PC-9 (cell line): ENCODE measurements at regions of chr4 and their contacts with region 1.

Region 1: GRCh38 chr4:39169426-39170185 is 12.7 kb upstream of the WDR19 start:
- DNase-seq: peak; percentile 27 to 52
- H3K4me3 ChIP-seq: no peak overlapping the region
- H3K27ac ChIP-seq: no peak overlapping the region
- H3K4me1 ChIP-seq: no peaks in the 10 kb centered on the region
- H3K27me3 ChIP-seq: no peaks in the 10 kb centered on the region
- CTCF ChIP-seq: no peak

Region 2: GRCh38 chr4:39085891-39086290 is 83.7 kb before region 1 on chr4:
- CTCF ChIA-PET with region 1: no interaction called
- POLR2A ChIA-PET with region 1: interaction called, 14 read pairs
- intact Hi-C with region 1: no loop called
- DNase-seq: no peak
- H3K4me3 ChIP-seq: no peak overlapping the region
- H3K27ac ChIP-seq: no peak overlapping the region
- H3K4me1 ChIP-seq: no peaks in the 10 kb centered on the region
- H3K27me3 ChIP-seq: no peaks in the 10 kb centered on the region
- CTCF ChIP-seq: no peak